Posterior cingulate gyrus (tissue), 11 donors: ENCODE measurements at regions of chr2 and their contacts with region 1.

Region 1: DNA sequence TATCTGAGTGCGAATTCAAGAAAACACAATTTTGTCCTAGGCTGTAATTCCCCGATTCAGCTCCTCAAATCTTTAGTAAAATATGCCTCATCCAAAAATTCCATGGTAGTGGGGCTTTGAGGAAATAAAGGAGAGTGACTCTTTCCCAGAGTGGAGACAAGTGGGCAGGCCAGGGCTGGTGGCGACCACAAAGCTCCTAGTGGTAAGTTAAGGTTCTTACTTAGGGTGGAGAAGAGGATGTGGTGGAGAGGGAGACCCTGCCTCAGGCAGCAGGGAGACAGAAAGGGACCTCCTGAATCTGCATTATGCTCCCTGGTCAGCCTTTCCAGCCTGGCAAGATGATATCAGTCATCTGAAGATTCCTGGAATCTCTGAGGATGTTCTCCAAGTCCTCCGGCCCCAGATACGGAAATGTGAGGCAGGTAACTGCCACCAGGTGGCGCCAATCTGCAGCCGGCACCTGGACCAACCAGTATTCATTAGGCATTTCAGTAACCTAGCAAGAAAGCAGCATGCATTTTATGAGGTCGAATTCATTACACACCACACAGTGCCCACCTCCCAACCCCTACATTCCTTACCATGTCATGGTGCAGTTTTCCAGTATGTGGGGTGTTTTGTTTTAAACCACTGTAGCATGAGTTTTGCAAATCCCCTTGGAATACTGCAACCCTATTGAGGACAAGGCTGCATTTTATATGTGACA is 106.4 kb downstream of the POLE4 start:
- DNase-seq: peak; percentile 38 to 93 (median 62)

Region 2: DNA sequence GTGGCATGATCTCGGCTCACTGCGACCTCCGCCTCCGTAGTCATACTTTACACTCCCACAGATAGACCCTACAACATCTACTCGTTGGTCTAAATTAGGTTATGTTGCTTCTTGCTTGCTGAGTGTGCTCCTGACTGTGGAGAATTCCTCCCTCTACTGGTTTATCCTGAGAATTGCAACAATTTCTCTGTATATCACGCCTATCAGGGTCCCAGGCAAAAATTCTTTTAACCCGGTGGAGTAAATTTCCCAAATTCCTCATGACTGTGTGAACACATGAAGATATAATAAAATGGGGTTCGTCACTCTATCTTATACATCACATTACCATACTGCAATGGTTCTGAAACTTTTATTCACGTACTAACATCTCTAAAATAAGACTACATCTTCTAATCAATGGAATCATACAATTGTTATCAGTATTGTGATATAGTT is 339.2 kb after region 1 on chr2:
- intact Hi-C with region 1: loop called (anchors 5 kb)
- DNase-seq: no peak